ENCODE measurements at regions of chr14 and their contacts with region 1.

Region 1: DNA sequence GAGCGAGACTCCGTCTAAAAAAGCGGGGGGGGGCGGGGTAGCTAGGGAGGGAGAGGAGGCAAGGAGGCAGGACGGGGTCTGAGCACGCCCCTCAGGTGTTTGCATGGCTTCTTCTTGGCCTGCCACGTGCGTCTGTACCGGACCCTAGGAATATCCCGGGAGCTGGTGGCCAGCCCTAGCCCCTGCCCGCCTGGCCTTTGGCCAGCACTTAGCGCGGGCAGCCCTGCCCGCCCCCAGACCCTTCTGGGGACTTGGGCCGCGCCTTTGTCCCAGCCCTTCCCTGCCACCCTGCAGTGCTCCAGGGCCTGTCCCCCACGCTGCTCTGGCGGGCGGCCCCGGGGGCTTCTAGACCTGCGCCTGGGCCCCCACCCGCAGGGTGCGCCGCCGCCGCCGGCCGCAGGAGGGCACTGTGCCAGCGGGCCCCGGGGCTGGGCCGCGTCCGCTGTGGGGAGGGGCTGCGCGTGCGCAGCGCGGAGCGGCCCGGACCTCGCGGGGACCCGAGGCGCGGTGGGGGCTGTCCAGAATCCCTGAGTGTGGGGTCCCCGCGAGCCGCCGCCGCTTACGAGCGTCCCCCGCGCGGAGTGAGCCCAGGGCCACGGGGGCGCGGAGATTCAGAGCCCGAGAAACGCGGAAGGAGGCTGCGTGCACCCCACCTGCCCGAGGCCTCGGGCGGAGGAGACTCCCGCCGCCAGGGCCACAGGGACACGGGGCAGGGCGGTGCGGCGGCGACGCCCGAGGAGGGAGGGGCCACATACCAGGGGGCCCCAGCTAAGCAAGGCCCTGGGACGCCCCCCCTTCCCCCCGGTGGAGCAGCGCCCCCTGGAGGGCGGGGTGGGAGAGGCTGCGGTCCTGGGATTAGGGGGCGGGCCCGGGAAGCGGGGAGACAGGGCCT is 21.0 kb downstream of the SLC25A29 start:
- DNase-seq: peak; percentile 62 to 90 (median 80)
- ATAC-seq: peak; percentile 36 to 92 (median 82)
- H3K4me3 ChIP-seq: peak overlapping the region; percentile 60 to 98 (median 80)
- H3K27ac ChIP-seq: peak overlapping the region; percentile 59 to 94 (median 87)
- H3K4me1 ChIP-seq: peaks cover 0 to 70% (median 15%) of the 10 kb centered on the region in 12 donors
- H3K27me3 ChIP-seq: no peaks in the 10 kb centered on the region
- CTCF ChIP-seq: peak; percentile 52 to 89 (median 72)
- POLR2A ChIP-seq: peak in 1 of 2 donors; percentile 64

Region 2: DNA sequence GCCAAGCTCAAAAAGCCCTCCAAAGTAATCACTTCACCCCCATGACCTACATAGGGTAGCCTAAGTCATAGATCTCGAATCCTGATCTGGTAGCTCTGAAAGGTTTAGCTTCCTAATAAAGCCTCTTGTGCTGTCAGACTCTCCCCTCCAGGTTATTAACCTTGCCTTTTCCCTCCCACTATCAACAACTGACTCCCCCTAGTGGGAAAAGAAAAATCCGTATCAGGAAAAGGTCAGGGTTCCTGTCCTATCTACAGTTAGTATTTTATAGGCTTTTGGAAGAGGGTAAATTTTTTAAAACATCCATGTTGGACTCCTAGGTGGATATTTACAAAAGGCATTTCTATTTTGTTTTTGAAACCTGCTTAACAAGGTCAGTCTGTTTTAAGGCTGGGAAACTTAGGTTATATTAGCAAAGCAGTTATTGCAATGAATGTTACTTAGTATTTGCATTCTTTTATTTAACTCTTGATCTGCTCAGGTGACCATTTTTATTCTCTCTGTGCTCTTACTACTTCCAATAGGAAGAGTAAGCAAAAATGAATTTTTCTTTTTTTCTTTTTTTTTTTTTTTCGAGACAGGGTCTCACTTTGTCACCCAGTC is 38.3 kb before region 1 on chr14:
- intact Hi-C with region 1: loop called in 2 of 10 experiments (anchors 5 kb)
- DNase-seq: no peak
- ATAC-seq: peak in 3 of 4 donors; percentile 46 to 61 (median 61)
- H3K4me3 ChIP-seq: no peak overlapping the region
- H3K27ac ChIP-seq: peak overlapping the region in 1 of 12 donors; percentile 6
- H3K4me1 ChIP-seq: peaks cover 12 to 86% (median 66%) of the 10 kb centered on the region in 12 donors
- H3K27me3 ChIP-seq: no peaks in the 10 kb centered on the region
- CTCF ChIP-seq: peak; percentile 37 to 71 (median 56)
- POLR2A ChIP-seq: no peak

Measured in heart left ventricle (tissue), 16 donors.